Posterior cingulate gyrus (tissue), 11 donors: ENCODE measurements at regions of chr1 and their contacts with region 1.

Region 1: DNA sequence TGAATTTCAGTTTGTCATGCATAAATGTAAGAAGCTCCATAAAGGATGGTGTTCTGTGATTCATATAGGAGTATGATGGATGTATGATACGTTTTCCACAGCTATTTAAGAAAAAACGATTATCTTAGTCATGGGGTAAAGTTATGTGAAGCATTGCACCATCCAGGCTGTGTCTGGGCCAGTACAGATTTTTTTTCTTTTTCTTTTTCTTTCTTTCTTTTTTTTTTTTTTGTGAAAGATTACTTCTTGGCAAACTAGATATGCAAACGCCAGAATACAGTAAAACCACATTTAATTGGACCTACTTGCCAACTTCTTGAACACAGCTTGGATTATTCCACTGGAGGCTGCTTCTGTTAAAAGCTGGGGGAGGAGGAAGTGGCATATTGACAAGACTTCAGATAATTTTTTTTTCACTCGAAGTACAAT is 14.9 kb downstream of the ZBTB18 start:
- DNase-seq: no peak

Region 2: DNA sequence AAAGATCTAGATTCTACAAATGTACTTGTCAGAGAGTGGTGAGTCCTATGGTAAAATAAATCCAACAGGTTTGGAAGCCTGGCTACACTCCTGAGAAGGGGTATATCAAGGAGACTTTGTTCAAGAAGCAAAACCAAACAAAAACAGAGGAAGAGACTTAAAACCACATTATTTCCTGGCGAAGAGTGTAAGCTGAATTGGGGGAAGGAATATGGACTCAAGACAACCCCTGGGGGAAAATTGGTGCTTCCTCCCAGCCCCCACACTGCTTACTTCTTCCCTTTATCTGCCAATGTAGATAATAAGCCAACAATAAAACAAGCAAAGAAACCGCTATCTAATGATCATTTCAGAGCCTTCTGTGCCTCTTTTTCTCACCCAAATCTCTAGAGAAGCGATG is 63.3 kb before region 1 on chr1:
- intact Hi-C with region 1: loop called (anchors 10 kb)
- DNase-seq: no peak

Region 3: DNA sequence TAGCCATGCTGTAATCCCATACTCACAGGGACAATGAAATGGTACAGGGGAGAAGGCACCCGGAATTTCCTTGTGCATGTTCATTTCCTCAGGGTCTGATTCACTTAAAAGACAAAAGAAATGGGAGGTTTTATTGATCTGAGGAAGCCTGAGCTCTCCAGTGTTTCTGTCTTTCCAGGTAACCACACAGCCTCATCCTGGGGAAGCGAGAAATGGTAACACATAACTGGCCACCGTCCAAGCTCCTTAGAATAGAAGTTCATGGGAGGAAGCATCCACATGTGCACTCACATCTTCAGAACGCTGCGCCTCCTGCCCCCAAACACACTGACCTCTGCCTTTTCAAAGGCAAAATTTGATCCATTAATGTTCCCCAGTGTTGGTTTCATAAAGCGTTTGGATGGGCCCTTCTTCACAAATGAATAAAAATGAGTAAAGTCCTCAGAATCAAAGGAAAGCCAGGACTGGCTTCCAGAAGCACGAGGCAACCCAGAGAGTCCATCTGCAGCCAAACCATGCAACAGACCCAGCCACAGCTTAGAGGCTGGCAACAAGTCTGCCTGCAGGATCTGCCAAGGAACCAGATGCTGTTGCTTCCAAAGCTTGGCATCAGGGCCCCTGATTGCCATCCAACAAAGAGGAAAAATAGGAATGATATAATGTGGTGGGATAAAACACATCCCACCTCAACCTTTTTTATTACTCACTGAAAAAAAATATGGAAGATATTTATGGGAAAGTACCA is 105.4 kb after region 1 on chr1:
- intact Hi-C with region 1: loop called (anchors 10 kb)
- DNase-seq: peak; percentile 26 to 93 (median 70)

Region 4: DNA sequence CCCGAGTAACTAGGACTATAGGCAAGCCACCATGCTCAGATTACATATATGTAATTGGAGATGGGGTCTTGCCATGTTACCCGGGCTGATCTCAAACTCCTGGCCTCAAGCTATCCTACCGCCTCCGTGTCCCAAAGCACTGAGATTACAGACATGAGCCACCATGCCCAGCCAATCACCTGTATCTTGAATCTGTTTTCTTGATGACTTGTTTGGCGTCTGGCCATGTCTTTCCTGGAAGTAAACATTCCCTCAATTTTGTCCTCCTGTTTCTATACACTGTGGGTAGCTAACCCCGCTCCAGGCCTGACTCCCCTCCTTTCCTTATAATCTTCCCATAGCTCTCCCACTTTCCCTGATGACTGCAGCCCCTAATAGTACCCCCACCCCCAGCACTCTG is 224.0 kb after region 1 on chr1:
- intact Hi-C with region 1: no loop called
- DNase-seq: no peak

Region 5: DNA sequence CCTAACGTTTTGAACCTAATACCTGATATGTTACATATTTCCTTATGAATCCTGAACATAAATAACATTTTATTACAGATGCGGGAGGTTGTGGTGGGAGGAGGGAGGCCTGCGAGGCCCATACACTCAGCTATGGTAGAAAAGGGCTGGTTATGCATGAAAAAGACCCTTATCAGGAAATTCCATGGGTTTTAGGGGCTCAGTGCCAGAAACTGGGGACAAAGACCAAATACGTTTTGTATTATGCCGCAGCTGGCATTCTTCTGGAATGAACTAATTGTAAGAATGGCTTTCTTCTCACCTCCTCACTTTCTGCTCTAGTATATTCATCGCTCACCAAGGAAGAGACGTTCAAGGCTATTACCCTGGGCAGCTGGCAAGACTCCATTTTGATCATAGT is 309.1 kb after region 1 on chr1:
- intact Hi-C with region 1: no loop called
- DNase-seq: no peak